Left cardiac atrium (tissue), 4 donors: ENCODE measurements at regions of chr2 and their contacts with region 1.

Region 1: GRCh38 chr2:9712263-9712662 is 81.5 kb upstream of the YWHAQ start:
- DNase-seq: peak; percentile 80
- ATAC-seq: peak; percentile 92

Region 2: GRCh38 chr2:9630749-9631483 is 81.3 kb before region 1 on chr2 and contains the start of gene YWHAQ:
- intact Hi-C with region 1: loop called in 1 of 2 experiments (anchors 5 kb)
- DNase-seq: peak; percentile 99
- ATAC-seq: peak; percentile 98
- total RNA-seq, gene YWHAQ: 118 to 207 TPM

Region 3: DNA sequence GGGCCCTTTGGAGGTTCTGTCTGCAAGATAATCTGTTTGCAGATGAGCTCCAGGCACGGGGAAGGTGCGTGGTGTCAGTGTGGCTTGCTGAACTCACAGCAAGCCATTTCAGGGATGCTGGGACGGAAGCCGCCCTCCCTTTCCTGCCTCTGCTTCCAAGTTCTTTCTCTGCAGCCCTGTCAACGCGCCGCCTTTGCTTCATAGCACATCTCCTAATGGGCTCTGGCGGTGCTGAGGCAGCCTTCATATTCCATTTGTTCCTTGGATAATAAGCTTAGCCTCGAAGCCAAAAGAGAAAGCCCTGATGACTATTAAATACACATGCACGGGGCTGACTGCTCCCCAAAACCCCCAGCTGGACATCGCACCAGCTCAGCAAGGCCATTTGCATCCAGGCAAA is 49.3 kb after region 1 on chr2:
- intact Hi-C with region 1: loop called in 1 of 2 experiments (anchors 2 kb)
- DNase-seq: peak; percentile 56
- ATAC-seq: peak; percentile 20 to 67